ENCODE measurements at regions of chr7 and their contacts with region 1.

Region 1: DNA sequence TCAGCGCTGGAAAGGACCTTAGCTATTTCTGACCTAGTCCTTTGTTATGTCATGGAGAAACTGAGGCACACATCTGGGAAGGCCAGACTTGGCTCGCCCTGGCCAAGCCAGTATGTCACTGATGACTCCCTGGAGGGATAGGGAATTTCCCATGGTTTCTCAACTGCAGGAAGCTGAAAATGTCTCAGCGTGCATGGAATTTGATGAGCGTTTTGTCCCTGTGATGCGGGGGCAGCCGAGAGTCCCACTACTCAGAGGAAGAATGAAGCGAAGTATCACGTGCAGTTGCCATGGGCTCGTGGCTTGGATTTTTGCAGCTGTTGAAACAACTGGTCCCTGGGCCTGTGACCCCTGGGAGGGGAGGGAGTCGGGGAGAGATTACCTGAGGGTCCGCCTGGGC is 44.8 kb downstream of the CLIP2 start:
- DNase-seq: peak in 3 of 5 donors; percentile 24 to 41 (median 26)
- ATAC-seq: peak in 3 of 4 donors; percentile 31 to 72 (median 58)
- H3K4me3 ChIP-seq: no peak overlapping the region
- H3K27ac ChIP-seq: peak overlapping the region in 1 of 12 donors; percentile 34
- H3K4me1 ChIP-seq: peaks cover 0 to 9% (median 0%) of the 10 kb centered on the region in 12 donors
- H3K27me3 ChIP-seq: no peaks in the 10 kb centered on the region
- CTCF ChIP-seq: no peak
- POLR2A ChIP-seq: no peak

Region 2: GRCh38 chr7:74379938-74380337 is 45.9 kb after region 1 on chr7:
- intact Hi-C with region 1: loop called in 1 of 10 experiments (anchors 10 kb)
- DNase-seq: peak in 3 of 5 donors; percentile 35 to 71 (median 59)
- ATAC-seq: peak; percentile 90 to 97 (median 94)
- H3K4me3 ChIP-seq: no peak overlapping the region
- H3K27ac ChIP-seq: peak overlapping the region in 1 of 12 donors; percentile 36
- H3K4me1 ChIP-seq: peaks cover 0 to 4% (median 0%) of the 10 kb centered on the region in 12 donors
- H3K27me3 ChIP-seq: no peaks in the 10 kb centered on the region
- CTCF ChIP-seq: no peak
- POLR2A ChIP-seq: no peak

Measured in heart left ventricle (tissue), 16 donors.